GM10248 (cell line): ENCODE measurements at regions of chr6 and their contacts with region 1.

Region 1: DNA sequence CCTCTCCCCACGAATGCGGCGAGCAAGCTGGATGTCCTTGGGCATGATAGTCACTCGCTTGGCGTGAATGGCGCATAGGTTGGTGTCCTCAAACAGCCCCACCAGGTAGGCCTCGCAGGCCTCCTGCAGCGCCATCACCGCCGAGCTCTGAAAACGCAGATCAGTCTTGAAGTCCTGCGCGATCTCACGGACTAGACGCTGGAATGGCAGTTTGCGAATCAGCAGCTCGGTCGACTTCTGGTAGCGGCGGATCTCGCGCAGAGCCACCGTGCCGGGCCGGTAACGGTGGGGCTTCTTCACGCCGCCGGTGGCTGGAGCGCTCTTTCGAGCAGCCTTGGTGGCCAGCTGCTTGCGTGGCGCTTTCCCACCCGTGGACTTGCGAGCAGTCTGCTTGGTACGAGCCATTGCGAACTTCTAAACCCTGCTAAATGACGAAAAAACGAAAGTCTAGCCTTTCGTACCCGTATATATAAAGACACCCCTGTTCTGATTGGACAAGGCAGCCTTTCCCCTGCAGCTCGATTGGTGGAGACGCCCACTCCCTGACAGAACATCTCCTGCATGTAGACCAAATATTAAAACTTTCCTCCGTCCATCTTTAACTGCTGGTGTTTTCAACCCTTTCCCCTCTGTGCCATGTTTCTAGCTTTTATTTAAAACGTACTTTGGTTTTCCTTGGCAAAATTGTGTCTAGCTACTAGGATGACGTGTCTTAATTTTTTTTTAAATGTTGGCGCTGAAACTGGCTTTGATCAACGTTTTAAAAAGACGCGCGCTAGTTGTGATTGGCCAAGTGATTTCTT is 109.8 kb downstream of the HFE start:
- DNase-seq: peak; percentile 87
- CTCF ChIP-seq: peak; percentile 11

Region 2: DNA sequence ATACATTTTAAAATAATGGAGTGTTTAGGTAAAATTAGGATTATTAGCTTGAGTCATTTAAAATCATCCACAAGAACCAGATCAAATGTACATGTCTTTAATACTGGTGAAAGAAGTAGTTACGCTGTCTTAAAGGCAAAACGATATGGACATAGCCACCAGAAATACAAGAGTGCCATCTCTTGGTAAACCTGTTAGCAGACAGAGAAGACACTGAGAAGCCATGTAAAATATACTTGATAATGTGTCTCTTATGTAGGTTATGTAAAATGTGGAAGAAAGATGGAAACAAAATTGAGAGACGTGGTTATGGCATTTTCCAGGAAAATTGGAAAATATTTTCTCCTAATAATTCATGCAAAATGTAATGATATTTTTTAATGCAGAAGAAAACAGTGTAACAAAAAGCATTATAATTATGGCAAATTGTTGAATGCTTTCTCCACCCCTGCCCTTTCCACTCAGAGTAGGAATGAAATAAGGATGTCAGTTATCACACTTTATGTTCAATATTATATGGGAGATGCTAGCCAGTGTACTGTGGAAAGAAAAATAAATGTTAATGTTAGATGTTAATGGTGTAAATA is 254.4 kb before region 1 on chr6:
- CTCF ChIA-PET with region 1: no interaction called
- POLR2A ChIA-PET with region 1: no interaction called
- DNase-seq: peak; percentile 31
- CTCF ChIP-seq: peak; percentile 63

Region 3: DNA sequence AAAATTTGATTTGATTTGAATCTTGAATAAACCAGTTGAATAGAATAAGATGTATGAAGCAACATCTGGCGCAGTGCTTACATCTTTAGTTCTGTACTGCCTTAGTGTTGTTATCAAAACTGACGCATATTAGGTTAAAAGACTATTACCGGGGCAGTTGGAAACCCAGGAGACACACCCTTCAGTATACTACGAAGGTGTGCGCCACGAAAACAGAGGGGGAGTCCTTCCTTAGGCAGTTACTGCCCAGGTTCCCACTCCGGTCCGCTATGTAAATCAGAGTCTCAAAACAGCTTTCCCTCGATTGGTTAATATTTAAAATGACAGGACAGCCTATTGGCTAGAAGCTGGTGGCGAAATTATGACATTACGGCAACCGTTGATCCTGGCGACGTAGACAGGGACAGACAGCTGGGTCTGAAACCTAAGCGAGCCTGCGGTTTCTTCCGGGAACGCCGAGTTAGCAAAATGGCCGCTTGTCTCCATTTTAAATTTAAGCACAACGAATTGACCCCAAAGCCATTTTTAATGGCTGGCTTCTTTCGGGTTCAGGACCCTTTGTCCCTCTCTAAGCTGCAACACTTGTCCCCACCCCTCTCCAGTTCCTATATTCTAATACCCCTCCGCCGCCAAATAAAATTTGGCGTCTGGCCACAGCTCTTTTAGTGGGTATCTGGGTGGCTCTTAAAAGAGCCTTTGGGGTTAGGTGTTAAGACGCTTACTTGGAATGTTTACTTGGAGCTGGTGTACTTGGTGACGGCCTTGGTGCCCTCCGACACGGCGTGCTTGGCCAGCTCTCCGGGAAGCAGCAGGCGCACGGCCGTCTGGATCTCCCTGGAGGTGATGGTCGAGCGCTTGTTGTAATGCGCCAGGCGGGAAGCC is 74.0 kb before region 1 on chr6:
- CTCF ChIA-PET with region 1: no interaction called
- POLR2A ChIA-PET with region 1: interaction called, 76 read pairs
- DNase-seq: peak; percentile 83
- CTCF ChIP-seq: no peak

Region 4: DNA sequence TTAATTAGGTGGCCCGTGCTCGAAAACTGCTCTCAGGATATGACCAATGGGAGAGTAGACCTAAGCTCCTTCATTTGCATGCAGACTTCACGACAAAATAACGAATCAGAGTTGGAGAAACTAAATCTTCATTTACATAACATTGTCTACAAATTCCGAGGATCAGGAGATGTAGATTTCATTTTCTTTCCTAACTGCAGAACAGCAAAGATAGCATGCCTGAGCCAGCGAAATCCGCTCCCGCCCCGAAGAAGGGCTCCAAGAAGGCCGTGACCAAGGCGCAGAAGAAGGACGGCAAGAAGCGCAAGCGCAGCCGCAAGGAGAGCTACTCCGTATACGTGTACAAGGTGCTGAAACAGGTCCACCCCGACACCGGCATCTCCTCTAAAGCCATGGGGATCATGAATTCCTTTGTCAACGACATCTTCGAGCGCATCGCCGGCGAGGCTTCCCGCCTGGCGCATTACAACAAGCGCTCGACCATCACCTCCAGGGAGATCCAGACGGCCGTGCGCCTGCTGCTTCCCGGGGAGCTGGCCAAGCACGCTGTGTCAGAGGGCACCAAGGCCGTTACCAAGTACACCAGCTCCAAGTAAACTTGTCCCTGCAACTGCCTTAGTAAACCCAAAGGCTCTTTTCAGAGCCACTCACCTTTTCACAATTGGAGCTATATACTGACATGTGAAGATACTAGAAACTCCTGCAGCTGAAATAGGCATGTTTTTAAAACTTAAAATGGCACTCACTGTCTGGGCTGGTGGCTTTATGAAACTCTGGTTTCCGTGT is 13.3 kb before region 1 on chr6:
- CTCF ChIA-PET with region 1: interaction called, 47 read pairs
- POLR2A ChIA-PET with region 1: interaction called, 78 read pairs
- DNase-seq: peak; percentile 52
- CTCF ChIP-seq: no peak

Region 5: DNA sequence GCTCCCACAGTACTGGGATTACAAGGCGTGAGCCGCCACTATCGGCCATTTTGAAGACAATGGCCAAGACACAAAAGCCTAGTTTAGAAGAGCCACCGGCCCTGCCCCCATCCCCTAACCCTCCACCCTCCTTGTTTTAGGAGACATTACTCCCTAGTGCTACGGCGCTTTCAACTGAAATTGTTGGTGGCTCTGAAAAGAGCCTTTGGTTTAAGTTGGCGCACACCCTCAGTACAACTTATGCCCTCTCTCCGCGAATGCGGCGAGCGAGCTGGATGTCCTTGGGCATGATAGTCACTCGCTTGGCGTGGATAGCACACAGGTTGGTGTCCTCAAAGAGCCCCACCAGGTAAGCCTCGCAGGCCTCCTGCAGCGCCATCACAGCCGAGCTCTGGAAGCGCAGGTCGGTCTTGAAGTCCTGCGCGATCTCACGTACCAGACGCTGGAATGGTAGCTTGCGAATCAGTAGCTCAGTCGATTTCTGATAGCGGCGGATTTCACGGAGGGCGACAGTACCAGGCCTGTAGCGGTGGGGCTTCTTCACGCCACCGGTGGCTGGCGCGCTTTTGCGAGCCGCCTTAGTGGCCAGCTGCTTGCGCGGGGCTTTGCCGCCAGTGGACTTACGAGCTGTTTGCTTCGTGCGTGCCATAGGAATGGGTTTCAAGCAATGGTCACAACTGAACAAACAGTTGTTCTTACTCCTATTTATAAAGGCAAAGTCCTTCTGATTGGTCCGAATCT is 53.1 kb after region 1 on chr6:
- CTCF ChIA-PET with region 1: interaction called, 11 read pairs
- POLR2A ChIA-PET with region 1: interaction called, 38 read pairs
- DNase-seq: no peak
- CTCF ChIP-seq: peak; percentile 59

Region 6: GRCh38 chr6:26316291-26316690 is 119.2 kb after region 1 on chr6:
- CTCF ChIA-PET with region 1: no interaction called
- POLR2A ChIA-PET with region 1: no interaction called
- DNase-seq: no peak
- CTCF ChIP-seq: no peak

Region 7: GRCh38 chr6:27132532-27133280 is 935.7 kb after region 1 on chr6:
- CTCF ChIA-PET with region 1: no interaction called
- POLR2A ChIA-PET with region 1: interaction called, 15 read pairs
- DNase-seq: peak; percentile 95
- CTCF ChIP-seq: no peak